GM12878 (cell line): ENCODE measurements at regions of chr6 and their contacts with region 1.

Region 1: GRCh38 chr6:156953479-156954146 is 176.4 kb downstream of the ARID1B start:
- DNase-seq: no peak
- ATAC-seq: peak; percentile 67
- H3K4me3 ChIP-seq: no peak overlapping the region
- H3K27ac ChIP-seq: no peak overlapping the region
- H3K4me1 ChIP-seq: peaks cover 18% of the 10 kb centered on the region
- H3K27me3 ChIP-seq: no peaks in the 10 kb centered on the region
- CTCF ChIP-seq: peak in 1 of 3 experiments; percentile 40; a peak in 2 of 6 replicates
- EP300 ChIP-seq: no peak
- POLR2A ChIP-seq: no peak
- RAD21 ChIP-seq: no peak

Region 2: DNA sequence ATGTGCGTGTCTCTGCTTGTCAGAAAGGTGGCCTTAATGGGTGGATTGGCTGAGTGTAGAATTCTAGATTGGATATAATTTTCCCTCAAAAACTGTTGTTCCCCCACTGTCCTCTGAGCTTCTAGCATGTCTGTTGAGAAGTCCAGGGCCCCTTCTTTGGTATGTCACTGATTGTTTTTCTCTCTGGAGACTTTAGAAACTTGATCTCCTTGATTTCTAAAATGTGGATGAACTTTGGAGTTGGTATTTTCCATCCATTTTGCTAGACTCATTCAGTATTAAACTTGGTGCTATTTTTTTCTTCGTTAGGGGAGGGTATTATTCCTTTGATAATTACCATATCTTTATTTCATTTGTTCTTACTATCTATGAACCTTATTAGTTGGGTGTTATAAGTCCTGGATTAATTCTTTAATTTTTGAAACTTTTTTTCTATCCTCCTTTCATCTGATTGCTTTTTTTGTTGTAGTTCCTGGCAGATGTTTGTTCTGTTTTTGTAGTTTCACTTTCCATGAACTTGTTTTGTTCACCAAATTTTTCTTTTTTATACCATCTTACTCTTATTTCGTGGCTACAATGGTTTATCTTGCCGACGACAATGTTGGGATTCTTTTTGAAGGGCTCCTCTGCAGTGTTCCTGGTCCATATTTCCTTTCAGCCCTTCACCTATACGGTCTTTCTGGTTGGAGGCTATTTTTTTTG is 108.0 kb before region 1 on chr6:
- CTCF ChIA-PET with region 1: no interaction called
- POLR2A ChIA-PET with region 1: no interaction called
- RAD21 ChIA-PET with region 1: no interaction called
- SMC1A ChIA-PET with region 1: no interaction called
- in situ Hi-C with region 1: no loop called
- intact Hi-C with region 1: no loop called
- DNase-seq: no peak
- ATAC-seq: no peak
- H3K4me3 ChIP-seq: no peak overlapping the region
- H3K27ac ChIP-seq: peak overlapping the region; percentile 30; the same call in 1 of the 2 replicates
- H3K4me1 ChIP-seq: peaks cover 25% of the 10 kb centered on the region
- H3K27me3 ChIP-seq: no peaks in the 10 kb centered on the region
- CTCF ChIP-seq: no peak
- EP300 ChIP-seq: no peak
- POLR2A ChIP-seq: no peak
- RAD21 ChIP-seq: no peak

Region 3: DNA sequence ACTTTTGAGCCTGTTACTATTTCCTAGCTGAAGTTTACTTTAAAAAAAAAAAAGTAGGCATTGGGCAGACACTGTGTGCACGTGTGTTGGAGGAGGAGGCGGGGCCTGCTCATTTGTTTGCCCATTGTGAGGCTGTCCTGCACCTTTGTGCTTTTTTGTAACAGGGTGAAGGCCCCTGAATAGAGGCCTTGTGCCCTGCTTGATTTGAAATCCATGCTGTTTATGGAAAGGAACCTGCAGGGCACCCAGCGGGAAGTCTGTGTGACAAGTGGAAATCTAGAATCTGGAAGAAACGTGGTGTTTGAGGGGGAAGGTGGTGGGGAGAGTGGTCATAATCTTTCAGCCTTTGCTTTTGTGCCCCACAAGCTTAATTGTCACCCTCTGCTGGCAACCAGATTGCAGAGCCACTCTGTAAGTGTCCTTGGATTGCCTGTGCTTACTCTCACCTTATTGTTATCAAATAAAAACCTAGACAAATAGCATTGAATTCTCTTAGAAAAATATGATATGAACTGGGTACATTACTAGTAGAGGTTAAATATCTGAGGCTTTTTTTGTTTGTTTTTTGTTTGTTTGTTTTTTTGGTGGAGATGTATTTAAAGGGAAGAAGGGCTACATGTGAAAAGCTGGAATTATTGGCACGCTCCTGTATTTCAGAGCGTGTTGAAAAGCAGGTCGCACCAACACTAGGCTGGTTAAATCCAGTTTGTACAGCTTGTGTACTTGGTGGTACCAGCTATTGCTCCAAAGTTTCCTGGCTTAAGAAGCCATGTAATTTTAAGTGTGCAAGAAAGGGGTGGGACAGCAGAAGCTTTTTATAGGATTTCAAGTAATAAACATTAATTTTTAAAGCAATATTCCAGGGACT is 20.2 kb before region 1 on chr6:
- CTCF ChIA-PET with region 1: interaction called, 6 read pairs
- POLR2A ChIA-PET with region 1: interaction called, 4 read pairs
- RAD21 ChIA-PET with region 1: interaction called, 4 read pairs
- SMC1A ChIA-PET with region 1: interaction called, 37 read pairs
- in situ Hi-C with region 1: no loop called
- intact Hi-C with region 1: no loop called
- DNase-seq: no peak
- ATAC-seq: peak; percentile 66
- H3K4me3 ChIP-seq: no peak overlapping the region
- H3K27ac ChIP-seq: no peak overlapping the region
- H3K4me1 ChIP-seq: no peaks in the 10 kb centered on the region
- H3K27me3 ChIP-seq: no peaks in the 10 kb centered on the region
- CTCF ChIP-seq: peak in 2 of 3 experiments; percentile 3 to 36; a peak in 4 of 6 replicates
- EP300 ChIP-seq: no peak
- POLR2A ChIP-seq: no peak
- RAD21 ChIP-seq: peak; percentile 23; the same call in 1 of the 2 replicates

Region 4: GRCh38 chr6:156942266-156942665 is 11.3 kb before region 1 on chr6:
- CTCF ChIA-PET with region 1: interaction called, 11 read pairs
- POLR2A ChIA-PET with region 1: interaction called, 6 read pairs
- RAD21 ChIA-PET with region 1: interaction called, 4 read pairs
- SMC1A ChIA-PET with region 1: interaction called, 30 read pairs
- in situ Hi-C with region 1: no loop called
- intact Hi-C with region 1: no loop called
- DNase-seq: no peak
- ATAC-seq: peak; percentile 65
- H3K4me3 ChIP-seq: no peak overlapping the region
- H3K27ac ChIP-seq: no peak overlapping the region
- H3K4me1 ChIP-seq: no peaks in the 10 kb centered on the region
- H3K27me3 ChIP-seq: no peaks in the 10 kb centered on the region
- CTCF ChIP-seq: peak in 1 of 3 experiments; percentile 12; a peak in 1 of 6 replicates
- EP300 ChIP-seq: no peak
- POLR2A ChIP-seq: no peak
- RAD21 ChIP-seq: no peak

Region 5: DNA sequence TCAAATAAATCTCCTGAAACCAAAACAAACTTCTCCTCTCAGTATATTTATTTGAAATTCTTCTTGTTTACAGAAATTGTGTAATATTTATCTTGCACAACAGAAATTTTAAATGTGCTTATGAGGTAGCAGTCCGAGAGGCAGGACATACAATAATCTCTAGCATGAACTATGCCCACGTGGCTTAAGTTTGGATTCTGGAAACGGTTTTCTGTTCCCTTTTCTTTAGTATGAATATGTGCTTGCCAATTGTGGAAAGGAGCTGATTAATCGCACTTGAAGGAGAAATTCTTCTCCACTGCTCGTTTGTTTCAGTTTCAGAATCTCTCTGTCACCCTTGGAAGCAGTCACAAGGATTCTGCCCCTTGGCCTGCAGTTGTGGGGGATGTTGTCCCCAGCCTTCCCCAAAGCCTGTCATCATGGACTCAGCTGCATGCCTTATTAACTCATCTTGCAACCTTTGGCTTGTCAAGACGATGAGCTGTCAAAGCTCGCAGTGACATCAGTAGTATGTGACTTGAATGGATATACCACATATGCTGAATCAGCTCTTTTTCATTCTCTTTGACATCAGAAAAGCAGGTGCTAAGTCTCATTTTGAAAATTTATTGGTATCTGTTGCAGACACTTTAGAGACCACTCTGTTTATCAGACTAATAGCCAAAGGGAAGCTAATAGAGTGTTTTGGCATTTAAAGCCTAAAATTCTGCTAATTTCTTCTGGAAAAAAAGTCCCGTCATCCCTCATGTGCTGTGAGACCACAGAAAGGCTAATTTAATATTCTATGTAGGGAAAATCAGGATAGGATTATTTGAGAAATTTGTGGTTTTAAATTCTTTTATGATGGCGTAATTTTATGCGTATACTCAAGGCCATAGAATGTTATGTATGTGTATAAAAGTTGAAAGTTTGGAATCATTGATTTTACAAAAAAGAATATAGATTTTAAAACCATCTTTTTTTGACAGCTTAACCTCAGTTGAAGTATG is 10.4 kb after region 1 on chr6:
- CTCF ChIA-PET with region 1: interaction called, 5 read pairs
- POLR2A ChIA-PET with region 1: no interaction called
- RAD21 ChIA-PET with region 1: interaction called, 3 read pairs
- SMC1A ChIA-PET with region 1: interaction called, 18 read pairs
- in situ Hi-C with region 1: no loop called
- intact Hi-C with region 1: no loop called
- DNase-seq: peak; percentile 30
- ATAC-seq: peak; percentile 90
- H3K4me3 ChIP-seq: no peak overlapping the region
- H3K27ac ChIP-seq: no peak overlapping the region; the same call in 1 of the 2 replicates
- H3K4me1 ChIP-seq: peaks cover 11% of the 10 kb centered on the region
- H3K27me3 ChIP-seq: no peaks in the 10 kb centered on the region
- CTCF ChIP-seq: no peak
- EP300 ChIP-seq: no peak
- POLR2A ChIP-seq: no peak
- RAD21 ChIP-seq: no peak

Region 6: GRCh38 chr6:157021344-157021992 is 67.9 kb after region 1 on chr6:
- CTCF ChIA-PET with region 1: interaction called, 5 read pairs
- POLR2A ChIA-PET with region 1: interaction called, 4 read pairs
- RAD21 ChIA-PET with region 1: interaction called, 10 read pairs
- SMC1A ChIA-PET with region 1: interaction called, 5 read pairs
- in situ Hi-C with region 1: no loop called
- intact Hi-C with region 1: no loop called
- DNase-seq: no peak
- ATAC-seq: peak; percentile 88
- H3K4me3 ChIP-seq: peak overlapping the region; percentile 86
- H3K27ac ChIP-seq: peak overlapping the region; percentile 95
- H3K4me1 ChIP-seq: peaks cover 32% of the 10 kb centered on the region
- H3K27me3 ChIP-seq: no peaks in the 10 kb centered on the region
- CTCF ChIP-seq: peak; percentile 17 to 42 (median 19); a peak in 4 of 6 replicates
- EP300 ChIP-seq: peak in 1 of 2 experiments; percentile 20; a peak in 1 of 4 replicates
- POLR2A ChIP-seq: peak; percentile 98
- RAD21 ChIP-seq: peak; percentile 17; the same call in 1 of the 2 replicates